ENCODE measurements at regions of chr3 and their contacts with region 1.

Region 1: GRCh38 chr3:126389112-126389793 is 5.5 kb upstream of the CFAP100 start:
- DNase-seq: peak; percentile 76
- ATAC-seq: peak; percentile 99
- H3K4me3 ChIP-seq: peak overlapping the region; percentile 14
- H3K27ac ChIP-seq: no peak overlapping the region
- H3K4me1 ChIP-seq: no peaks in the 10 kb centered on the region
- H3K27me3 ChIP-seq: peaks cover 27% of the 10 kb centered on the region
- CTCF ChIP-seq: peak; percentile 100; the same call in 1 of the 2 replicates
- POLR2A ChIP-seq: peak; percentile 54; the same call in 1 of the 2 replicates
- RAD21 ChIP-seq: peak; percentile 97

Region 2: GRCh38 chr3:125957674-125958510 is 431.4 kb before region 1 on chr3:
- CTCF ChIA-PET with region 1: no interaction called
- POLR2A ChIA-PET with region 1: no interaction called
- dilution Hi-C with region 1: no loop called
- in situ Hi-C with region 1: loop called (anchors 25 kb)
- intact Hi-C with region 1: no loop called
- DNase-seq: no peak
- ATAC-seq: no peak; the same call in 1 of the 2 replicates
- H3K4me3 ChIP-seq: no peak overlapping the region
- H3K27ac ChIP-seq: no peak overlapping the region
- H3K4me1 ChIP-seq: no peaks in the 10 kb centered on the region
- H3K27me3 ChIP-seq: peaks cover 6% of the 10 kb centered on the region
- CTCF ChIP-seq: no peak
- POLR2A ChIP-seq: no peak
- RAD21 ChIP-seq: no peak

Region 3: DNA sequence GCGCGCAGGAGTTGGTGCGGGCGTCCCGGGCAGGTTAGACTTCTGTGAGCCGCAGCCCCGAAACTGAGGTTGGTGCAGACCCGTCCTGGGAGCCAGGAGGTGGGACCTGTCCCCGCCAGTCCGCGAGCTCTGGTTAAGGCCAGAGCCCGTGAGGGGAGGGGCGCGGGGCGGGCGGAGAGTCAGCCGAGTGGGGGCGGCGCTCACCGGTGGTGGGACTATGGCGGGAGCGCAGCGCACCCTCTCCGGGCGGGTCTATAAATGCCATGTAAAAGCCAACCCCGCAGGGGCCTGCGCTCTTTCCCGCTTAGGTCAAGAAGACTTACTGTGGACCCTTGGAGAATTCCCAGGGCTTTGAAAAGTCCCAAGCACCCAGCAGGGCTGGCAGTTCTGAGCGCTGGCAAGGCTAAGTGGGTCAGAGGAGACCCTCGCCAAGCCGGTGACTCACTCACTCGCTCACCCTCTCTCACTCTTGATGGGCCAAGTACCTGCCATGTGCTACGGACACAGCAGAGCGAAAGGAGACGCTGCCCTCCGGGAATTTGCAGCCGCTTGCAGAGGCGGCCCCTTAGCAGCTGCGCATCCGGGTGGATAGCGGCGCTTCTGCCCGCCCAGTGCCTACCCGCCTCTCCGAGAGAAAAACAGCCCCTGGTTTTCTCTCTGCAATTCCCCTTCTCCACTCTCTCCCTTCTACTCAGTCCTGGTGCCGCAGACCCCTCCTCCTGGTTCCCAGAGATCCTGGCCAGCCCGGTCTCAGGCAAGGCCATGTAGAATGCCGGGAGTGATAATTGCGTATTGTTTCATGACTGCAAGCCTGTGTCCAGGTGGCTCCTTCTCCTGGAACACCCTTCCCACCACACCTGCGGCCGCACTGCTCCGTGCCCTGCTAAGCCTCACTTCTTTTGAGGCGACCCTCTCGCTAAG is 208.5 kb before region 1 on chr3 and contains the start of gene ALDH1L1:
- CTCF ChIA-PET with region 1: no interaction called
- POLR2A ChIA-PET with region 1: no interaction called
- dilution Hi-C with region 1: no loop called
- in situ Hi-C with region 1: no loop called
- intact Hi-C with region 1: no loop called
- DNase-seq: peak; percentile 6
- ATAC-seq: peak; percentile 53
- H3K4me3 ChIP-seq: peak within 1 kb of the TSS; percentile 30; the same call in 1 of the 2 replicates
- H3K27ac ChIP-seq: no peak within 1 kb of the TSS
- H3K4me1 ChIP-seq: no peaks in the 10 kb centered on the region
- H3K27me3 ChIP-seq: peaks cover 47% of the 10 kb centered on the region
- CTCF ChIP-seq: no peak
- POLR2A ChIP-seq: no peak
- RAD21 ChIP-seq: no peak
- total RNA-seq, gene ALDH1L1: not detected in 2 replicates

Region 4: GRCh38 chr3:126197854-126198584 is 191.2 kb before region 1 on chr3:
- CTCF ChIA-PET with region 1: interaction called, 4 read pairs
- POLR2A ChIA-PET with region 1: no interaction called
- dilution Hi-C with region 1: no loop called
- in situ Hi-C with region 1: no loop called
- intact Hi-C with region 1: loop called (anchors 1 kb)
- DNase-seq: peak; percentile 60
- ATAC-seq: peak; percentile 95
- H3K4me3 ChIP-seq: no peak overlapping the region
- H3K27ac ChIP-seq: no peak overlapping the region
- H3K4me1 ChIP-seq: no peaks in the 10 kb centered on the region
- H3K27me3 ChIP-seq: peaks cover 10% of the 10 kb centered on the region
- CTCF ChIP-seq: peak; percentile 72
- POLR2A ChIP-seq: no peak
- RAD21 ChIP-seq: peak; percentile 70

Region 5: DNA sequence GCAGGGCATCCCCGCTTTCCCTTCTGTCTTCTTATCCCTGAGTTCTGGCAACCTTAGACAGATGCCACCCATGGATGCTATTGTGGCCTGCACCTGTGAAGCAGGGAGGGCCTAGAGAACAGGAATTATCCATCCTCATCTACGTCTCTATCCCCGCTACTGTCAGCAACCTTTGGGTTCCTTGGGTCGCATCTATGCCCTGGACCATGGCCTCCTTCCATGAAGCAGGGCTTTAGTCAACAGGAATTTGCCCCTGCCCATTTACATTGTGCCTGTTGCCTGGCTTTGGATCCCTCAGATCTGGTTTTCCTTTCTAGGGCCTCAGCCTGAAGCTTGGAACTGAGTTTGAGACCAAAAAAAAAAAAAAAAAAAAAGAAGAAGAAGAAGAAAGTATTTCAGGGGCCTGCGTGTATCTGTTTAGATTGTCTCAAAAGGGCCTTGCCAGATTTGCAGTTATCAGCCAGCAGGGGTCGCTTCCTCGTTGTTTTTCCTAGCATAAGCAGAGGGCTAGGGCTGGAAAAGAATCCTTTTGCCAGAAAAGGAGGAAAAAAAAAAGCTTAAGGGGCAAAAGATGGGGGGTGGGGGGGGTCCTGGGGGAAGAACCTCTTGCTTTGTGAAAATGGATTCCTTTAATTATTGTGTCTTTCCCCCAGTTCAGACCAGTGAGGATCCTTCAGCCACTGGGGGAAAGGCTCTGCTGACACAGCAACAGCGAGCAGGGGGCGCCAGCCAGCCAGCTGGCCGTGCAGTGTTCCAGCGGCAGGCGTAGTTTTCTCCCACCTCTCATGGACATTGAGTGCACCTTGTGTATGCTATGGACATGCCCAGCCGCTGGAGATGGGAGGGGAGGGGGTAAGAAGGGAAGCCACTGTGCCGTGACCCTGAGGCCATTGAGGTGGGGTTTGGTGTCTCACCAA is 143.2 kb before region 1 on chr3:
- CTCF ChIA-PET with region 1: interaction called, 4 read pairs
- POLR2A ChIA-PET with region 1: no interaction called
- dilution Hi-C with region 1: no loop called
- in situ Hi-C with region 1: loop called (anchors 10 kb)
- intact Hi-C with region 1: loop called (anchors 1 kb)
- DNase-seq: peak; percentile 65
- ATAC-seq: peak; percentile 87
- H3K4me3 ChIP-seq: no peak overlapping the region
- H3K27ac ChIP-seq: no peak overlapping the region
- H3K4me1 ChIP-seq: no peaks in the 10 kb centered on the region
- H3K27me3 ChIP-seq: peaks cover 28% of the 10 kb centered on the region
- CTCF ChIP-seq: peak; percentile 65
- POLR2A ChIP-seq: no peak
- RAD21 ChIP-seq: peak; percentile 63

Region 6: GRCh38 chr3:126259411-126260391 is 129.6 kb before region 1 on chr3:
- CTCF ChIA-PET with region 1: no interaction called
- POLR2A ChIA-PET with region 1: no interaction called
- dilution Hi-C with region 1: no loop called
- in situ Hi-C with region 1: no loop called
- intact Hi-C with region 1: loop called (anchors 1 kb)
- DNase-seq: peak; percentile 10
- ATAC-seq: peak; percentile 67
- H3K4me3 ChIP-seq: no peak overlapping the region
- H3K27ac ChIP-seq: peak overlapping the region; percentile 36; the same call in 1 of the 2 replicates
- H3K4me1 ChIP-seq: peaks cover 6% of the 10 kb centered on the region; the same call in 1 of the 2 replicates
- H3K27me3 ChIP-seq: no peaks in the 10 kb centered on the region; the same call in 1 of the 2 replicates
- CTCF ChIP-seq: peak; percentile 65
- POLR2A ChIP-seq: no peak
- RAD21 ChIP-seq: peak; percentile 74

Region 7: GRCh38 chr3:126277629-126278378 is 111.4 kb before region 1 on chr3:
- CTCF ChIA-PET with region 1: no interaction called
- POLR2A ChIA-PET with region 1: no interaction called
- dilution Hi-C with region 1: no loop called
- in situ Hi-C with region 1: no loop called
- intact Hi-C with region 1: no loop called
- DNase-seq: no peak
- ATAC-seq: no peak
- H3K4me3 ChIP-seq: no peak overlapping the region
- H3K27ac ChIP-seq: no peak overlapping the region
- H3K4me1 ChIP-seq: no peaks in the 10 kb centered on the region
- H3K27me3 ChIP-seq: peaks cover 15% of the 10 kb centered on the region
- CTCF ChIP-seq: no peak
- POLR2A ChIP-seq: no peak
- RAD21 ChIP-seq: no peak

Measured in IMR-90 (cell line).